A549 (cell line): ENCODE measurements at regions of chr1 and their contacts with region 1.

Region 1: DNA sequence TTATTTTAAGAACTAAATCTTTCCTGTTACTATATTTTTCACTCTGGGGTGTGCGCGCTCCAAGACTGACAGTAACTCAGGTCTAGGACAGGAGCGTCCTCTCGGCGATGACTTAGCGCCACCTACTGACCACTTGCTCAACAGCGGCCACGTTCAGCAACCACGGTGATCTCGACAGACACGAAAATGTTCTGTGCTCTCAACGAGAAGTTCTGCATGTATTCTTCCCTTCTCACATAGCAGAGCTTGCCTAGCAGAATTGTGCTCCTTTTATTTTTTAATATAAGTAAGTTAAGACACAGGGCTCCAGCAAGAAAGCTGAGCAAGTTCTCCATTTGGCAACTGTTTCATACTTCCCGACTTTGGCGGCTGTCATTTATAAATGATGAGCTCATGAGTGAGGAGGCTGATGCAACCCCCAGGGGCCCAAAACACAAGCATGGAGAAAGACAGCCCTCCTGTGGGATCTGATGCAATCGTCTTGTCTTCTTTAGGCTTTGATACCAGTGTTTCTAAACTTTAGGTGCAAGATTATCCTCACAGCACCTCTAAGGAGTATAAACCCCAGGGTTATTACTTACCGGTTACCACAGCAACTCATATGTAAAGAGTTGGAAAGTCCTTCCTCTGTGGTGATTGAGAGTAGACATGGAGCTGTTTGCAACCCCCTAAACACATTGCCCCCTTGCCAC is 92.6 kb downstream of the HHIPL2 start:
- DNase-seq: peak; percentile 77 to 78
- ATAC-seq: peak; percentile 94 to 99
- H3K4me3 ChIP-seq: no peak overlapping the region
- H3K27ac ChIP-seq: peak overlapping the region; percentile 16 to 54; a peak in 4 of 6 replicates
- H3K4me1 ChIP-seq: peaks cover 4% of the 10 kb centered on the region; the same call in 2 of the 3 replicates
- CTCF ChIP-seq: peak; percentile 95
- EP300 ChIP-seq: no peak
- POLR2A ChIP-seq: no peak
- RAD21 ChIP-seq: peak; percentile 96 to 97

Region 2: DNA sequence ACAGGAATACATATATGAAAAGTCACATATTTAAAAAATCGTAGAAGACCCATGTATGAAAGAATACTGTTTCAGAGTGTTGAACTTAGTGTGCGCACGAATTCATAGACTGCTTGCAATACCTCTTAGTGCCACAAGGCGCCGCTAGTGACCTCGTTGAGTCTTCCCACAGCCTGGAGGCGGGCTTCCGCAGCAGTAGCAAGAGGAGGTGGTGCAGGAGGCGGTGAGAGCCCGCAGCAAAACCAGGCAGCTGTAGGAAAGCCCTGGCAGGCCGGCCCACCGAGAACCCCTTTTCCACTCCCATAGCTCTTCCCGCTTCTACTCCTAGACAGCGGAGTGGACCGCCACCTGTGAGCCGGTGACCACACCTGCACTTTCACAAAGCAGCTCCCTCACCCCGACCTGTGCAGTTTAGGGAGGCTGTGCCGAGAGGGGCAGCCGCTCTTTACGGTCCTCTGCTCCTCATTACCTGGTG is 1645.1 kb before region 1 on chr1:
- CTCF ChIA-PET with region 1: interaction called, 14 read pairs
- POLR2A ChIA-PET with region 1: no interaction called
- DNase-seq: peak; percentile 57 to 77
- ATAC-seq: peak; percentile 83 to 95
- H3K4me3 ChIP-seq: no peak overlapping the region
- H3K27ac ChIP-seq: no peak overlapping the region
- H3K4me1 ChIP-seq: no peaks in the 10 kb centered on the region
- CTCF ChIP-seq: peak; percentile 79
- EP300 ChIP-seq: no peak
- POLR2A ChIP-seq: no peak
- RAD21 ChIP-seq: peak; percentile 83 to 84

Region 3: GRCh38 chr1:222009105-222009730 is 446.1 kb before region 1 on chr1:
- CTCF ChIA-PET with region 1: interaction called, 12 read pairs
- POLR2A ChIA-PET with region 1: no interaction called
- DNase-seq: peak; percentile 29 to 30
- ATAC-seq: peak; percentile 90 to 91
- H3K4me3 ChIP-seq: peak overlapping the region; percentile 33
- H3K27ac ChIP-seq: peak overlapping the region; percentile 26 to 55; a peak in 4 of 6 replicates
- H3K4me1 ChIP-seq: no peaks in the 10 kb centered on the region
- CTCF ChIP-seq: peak; percentile 68
- EP300 ChIP-seq: no peak
- POLR2A ChIP-seq: no peak
- RAD21 ChIP-seq: peak; percentile 69 to 79

Region 4: DNA sequence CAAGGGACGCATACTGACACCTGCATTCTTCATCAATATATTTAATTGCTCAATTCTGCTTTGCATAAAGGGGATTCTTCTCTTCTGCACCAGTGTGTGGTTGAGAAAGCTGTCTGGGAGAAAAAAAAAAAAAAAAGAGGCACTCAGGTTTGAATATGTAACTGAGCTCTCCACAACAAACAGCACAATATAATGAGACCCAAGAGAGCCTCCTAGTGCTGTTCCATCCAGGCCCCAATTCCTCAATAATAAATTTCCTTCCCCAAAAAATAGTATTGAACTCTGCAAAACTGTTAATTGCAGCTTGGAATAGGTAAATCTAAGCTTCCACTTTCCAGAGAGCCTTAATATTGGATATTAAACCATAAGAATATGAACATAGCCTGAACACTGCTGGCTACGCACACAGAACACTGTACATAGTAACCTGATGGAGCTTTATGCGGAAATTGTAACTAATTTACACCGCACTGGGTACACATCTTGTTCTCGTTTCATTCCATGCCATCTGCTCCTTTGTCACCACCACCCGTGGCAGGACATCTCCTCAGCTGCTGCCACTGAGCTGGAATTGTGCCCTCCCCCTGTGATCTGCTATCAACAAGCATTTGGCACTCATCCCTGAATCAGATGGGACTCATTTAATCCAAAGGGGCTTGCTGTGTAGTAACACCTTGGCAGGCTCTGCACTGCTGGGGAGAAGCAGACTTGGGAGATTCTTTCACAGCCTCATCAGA is 179.4 kb before region 1 on chr1:
- CTCF ChIA-PET with region 1: no interaction called
- POLR2A ChIA-PET with region 1: no interaction called
- DNase-seq: no peak
- ATAC-seq: 0 out of 6 replicates have a peak, but pooled peaks of 1 of the 2 experiments have one; percentile 43
- H3K4me3 ChIP-seq: no peak overlapping the region
- H3K27ac ChIP-seq: no peak overlapping the region
- H3K4me1 ChIP-seq: no peaks in the 10 kb centered on the region
- CTCF ChIP-seq: no peak
- EP300 ChIP-seq: no peak
- POLR2A ChIP-seq: no peak
- RAD21 ChIP-seq: no peak

Region 5: DNA sequence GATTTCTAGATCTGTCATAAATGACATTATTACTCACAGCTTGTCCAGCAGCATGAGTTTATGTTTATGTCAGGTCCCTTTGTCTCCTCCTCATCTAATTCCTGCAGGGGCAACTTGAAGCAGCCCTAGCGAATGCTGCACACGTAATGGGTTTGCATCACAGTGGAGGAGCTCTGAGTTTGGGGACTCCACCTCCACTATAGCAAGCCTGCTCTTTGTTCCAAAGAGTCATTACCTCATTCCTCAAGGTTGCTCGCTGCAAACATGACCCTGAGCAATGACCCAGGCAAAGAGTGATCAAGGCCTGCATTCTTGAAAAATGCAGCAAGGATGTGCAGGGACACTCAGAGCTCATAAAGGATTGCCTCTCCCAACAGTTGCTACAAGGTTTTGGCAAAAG is 169.3 kb before region 1 on chr1:
- CTCF ChIA-PET with region 1: no interaction called
- POLR2A ChIA-PET with region 1: no interaction called
- DNase-seq: no peak
- ATAC-seq: no peak
- H3K4me3 ChIP-seq: no peak overlapping the region
- H3K27ac ChIP-seq: no peak overlapping the region
- H3K4me1 ChIP-seq: no peaks in the 10 kb centered on the region
- CTCF ChIP-seq: no peak
- EP300 ChIP-seq: no peak
- POLR2A ChIP-seq: no peak
- RAD21 ChIP-seq: no peak

Region 6: GRCh38 chr1:222424826-222425225 is 30.5 kb before region 1 on chr1:
- CTCF ChIA-PET with region 1: interaction called, 10 read pairs
- POLR2A ChIA-PET with region 1: no interaction called
- DNase-seq: no peak
- ATAC-seq: no peak
- H3K4me3 ChIP-seq: no peak overlapping the region
- H3K27ac ChIP-seq: no peak overlapping the region
- H3K4me1 ChIP-seq: no peaks in the 10 kb centered on the region
- CTCF ChIP-seq: no peak
- EP300 ChIP-seq: no peak
- POLR2A ChIP-seq: no peak
- RAD21 ChIP-seq: no peak

Region 7: GRCh38 chr1:222465211-222466041 is 10.1 kb after region 1 on chr1:
- CTCF ChIA-PET with region 1: interaction called, 68 read pairs
- POLR2A ChIA-PET with region 1: no interaction called
- DNase-seq: peak; percentile 93 to 96
- ATAC-seq: peak; percentile 99 to 100
- H3K4me3 ChIP-seq: peak overlapping the region; percentile 44
- H3K27ac ChIP-seq: peak overlapping the region; percentile 87 to 91
- H3K4me1 ChIP-seq: peaks cover 8% of the 10 kb centered on the region
- CTCF ChIP-seq: peak; percentile 98
- EP300 ChIP-seq: no peak
- POLR2A ChIP-seq: peak; percentile 56
- RAD21 ChIP-seq: peak; percentile 87 to 100